PC-9 (cell line): ENCODE measurements at regions of chr11 and their contacts with region 1.

Region 1: DNA sequence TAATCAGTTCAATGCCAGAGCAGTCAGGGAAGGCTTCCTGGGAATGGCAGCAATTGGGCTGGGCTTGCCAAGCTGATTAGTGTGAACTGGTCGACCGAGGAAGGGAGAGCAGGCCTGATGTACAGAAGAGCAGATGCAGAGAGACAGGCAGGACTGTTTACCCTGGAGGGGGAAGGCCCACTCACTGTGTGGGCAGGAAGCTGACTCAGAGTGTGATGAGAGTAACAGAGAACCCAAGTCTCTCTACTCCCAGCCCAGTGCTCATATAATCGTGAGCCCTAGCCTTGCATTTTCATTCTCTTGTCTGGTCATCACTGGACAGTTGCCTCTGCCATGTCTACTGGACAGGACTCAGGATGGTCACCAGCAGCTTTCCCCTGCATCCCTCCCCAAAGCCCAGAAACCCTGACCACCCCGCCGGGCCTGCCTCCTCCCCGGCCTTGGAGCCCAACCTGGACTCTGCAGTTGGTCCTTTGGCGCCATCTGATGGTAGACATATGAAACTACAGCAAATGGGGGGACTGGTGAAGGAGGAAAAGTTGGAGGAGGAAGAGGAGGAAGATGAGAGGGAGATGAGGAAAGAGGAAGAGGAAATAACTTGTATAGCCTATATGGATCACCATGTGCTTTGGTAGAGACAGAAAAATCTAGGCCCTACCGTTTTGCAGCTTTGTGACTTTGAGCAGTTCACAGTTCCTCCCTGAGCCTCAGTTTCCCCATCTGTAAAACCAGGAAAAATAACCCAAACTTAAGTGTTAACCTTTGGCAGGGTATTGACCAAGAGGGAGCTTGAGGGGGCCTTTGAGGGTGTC is 43.4 kb upstream of the PRDM11 start:
- DNase-seq: peak in 1 of 2 experiments; percentile 44
- H3K4me3 ChIP-seq: no peak overlapping the region
- H3K27ac ChIP-seq: no peak overlapping the region
- H3K4me1 ChIP-seq: no peaks in the 10 kb centered on the region
- H3K27me3 ChIP-seq: peaks cover 46% of the 10 kb centered on the region
- CTCF ChIP-seq: peak; percentile 99

Region 2: DNA sequence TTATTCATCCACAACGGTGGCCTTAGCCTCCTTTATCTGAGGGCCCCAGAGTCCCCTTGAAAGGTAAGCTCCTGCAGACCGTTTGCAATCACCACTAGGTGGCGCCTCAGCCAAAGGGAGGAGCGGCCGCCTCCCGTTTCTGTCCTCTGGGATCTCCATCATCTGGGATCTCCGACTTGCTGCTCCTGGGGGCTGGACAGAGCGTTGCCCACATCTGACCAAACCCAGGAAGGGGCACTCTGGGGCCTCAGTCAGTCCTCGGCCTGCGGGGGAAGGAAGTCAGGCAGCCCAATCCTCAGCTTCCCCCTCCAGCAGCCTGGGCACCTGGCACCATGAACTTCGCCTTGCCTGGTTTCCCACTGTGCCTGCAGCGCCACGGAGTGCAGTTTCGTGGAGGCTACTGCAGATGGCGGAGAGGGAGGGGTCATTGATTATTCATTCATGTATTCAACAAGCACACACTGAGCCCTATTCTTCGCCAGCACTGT is 175.8 kb before region 1 on chr11:
- CTCF ChIA-PET with region 1: interaction called, 6 read pairs
- POLR2A ChIA-PET with region 1: no interaction called
- intact Hi-C with region 1: loop called (anchors 1 kb)
- DNase-seq: peak; percentile 46 to 66
- H3K4me3 ChIP-seq: no peak overlapping the region
- H3K27ac ChIP-seq: no peak overlapping the region
- H3K4me1 ChIP-seq: no peaks in the 10 kb centered on the region
- H3K27me3 ChIP-seq: peaks cover 62% of the 10 kb centered on the region
- CTCF ChIP-seq: peak; percentile 94